BJ (cell line): ENCODE measurements at regions of chr10 and their contacts with region 1.

Region 1: DNA sequence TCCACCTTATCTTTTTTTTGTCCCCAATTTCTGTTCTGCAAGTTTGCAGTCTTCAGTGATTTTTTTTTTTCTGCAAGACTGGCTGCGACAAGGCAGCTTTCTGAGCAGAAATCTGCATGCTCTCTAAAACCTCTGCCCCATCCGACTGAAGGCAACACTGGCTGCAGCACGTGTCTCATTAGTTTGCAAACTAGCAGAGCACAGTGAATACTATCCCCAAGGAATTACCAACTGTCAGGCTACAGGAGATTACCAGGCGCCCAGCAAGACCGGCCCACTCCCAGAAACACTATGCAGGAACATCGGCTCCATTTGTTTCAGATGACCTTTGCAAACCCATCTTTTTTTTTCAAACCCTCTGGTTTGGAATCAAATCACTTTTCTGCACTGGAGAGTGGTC is 538.8 kb downstream of the SORCS1 start:
- DNase-seq: no peak
- H3K4me3 ChIP-seq: no peak overlapping the region
- H3K27me3 ChIP-seq: no peaks in the 10 kb centered on the region
- CTCF ChIP-seq: no peak

Region 2: GRCh38 chr10:106672517-106673175 is 46.9 kb after region 1 on chr10:
- CTCF ChIA-PET with region 1: interaction called, 10 read pairs
- POLR2A ChIA-PET with region 1: no interaction called
- DNase-seq: no peak
- H3K4me3 ChIP-seq: no peak overlapping the region
- H3K27me3 ChIP-seq: no peaks in the 10 kb centered on the region
- CTCF ChIP-seq: no peak